ENCODE measurements at regions of chr2 and their contacts with region 1.

Region 1: GRCh38 chr2:63424329-63425078 is 163.8 kb downstream of the WDPCP start:
- DNase-seq: peak; percentile 72
- H3K4me3 ChIP-seq: no peak overlapping the region
- H3K27ac ChIP-seq: no peak overlapping the region
- H3K4me1 ChIP-seq: no peaks in the 10 kb centered on the region
- CTCF ChIP-seq: peak; percentile 91

Region 2: GRCh38 chr2:62456721-62457539 is 967.6 kb before region 1 on chr2:
- CTCF ChIA-PET with region 1: no interaction called
- POLR2A ChIA-PET with region 1: no interaction called
- intact Hi-C with region 1: no loop called
- DNase-seq: peak; percentile 41
- H3K4me3 ChIP-seq: no peak overlapping the region
- H3K27ac ChIP-seq: no peak overlapping the region
- H3K4me1 ChIP-seq: no peaks in the 10 kb centered on the region
- CTCF ChIP-seq: peak; percentile 84

Region 3: DNA sequence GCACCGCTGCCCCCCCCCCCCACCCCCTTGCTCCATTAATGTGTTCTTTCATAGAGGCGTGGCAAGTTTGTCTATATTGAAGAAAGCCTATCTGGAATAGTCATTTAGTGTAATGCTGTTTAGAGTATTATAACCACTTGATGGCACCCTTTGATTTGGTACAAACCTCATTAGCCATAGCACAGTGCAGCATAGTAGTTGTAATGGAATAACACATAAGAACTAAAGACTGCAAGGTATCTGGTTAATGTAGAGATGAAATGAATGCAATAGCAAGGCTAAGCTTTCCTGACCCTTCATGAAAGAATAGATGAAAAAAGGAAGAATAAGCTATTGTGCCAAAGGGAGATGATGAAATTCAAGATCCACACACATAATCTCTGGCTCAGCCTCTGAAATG is 637.1 kb before region 1 on chr2:
- CTCF ChIA-PET with region 1: no interaction called
- POLR2A ChIA-PET with region 1: no interaction called
- intact Hi-C with region 1: loop called (anchors 10 kb)
- DNase-seq: peak; percentile 35
- H3K4me3 ChIP-seq: no peak overlapping the region
- H3K27ac ChIP-seq: no peak overlapping the region
- H3K4me1 ChIP-seq: no peaks in the 10 kb centered on the region
- CTCF ChIP-seq: peak; percentile 60

Region 4: GRCh38 chr2:63078852-63079606 is 345.5 kb before region 1 on chr2:
- CTCF ChIA-PET with region 1: no interaction called
- POLR2A ChIA-PET with region 1: no interaction called
- intact Hi-C with region 1: loop called (anchors 10 kb)
- DNase-seq: peak; percentile 16
- H3K4me3 ChIP-seq: no peak overlapping the region
- H3K27ac ChIP-seq: no peak overlapping the region
- H3K4me1 ChIP-seq: no peaks in the 10 kb centered on the region
- CTCF ChIP-seq: peak; percentile 74

Region 5: DNA sequence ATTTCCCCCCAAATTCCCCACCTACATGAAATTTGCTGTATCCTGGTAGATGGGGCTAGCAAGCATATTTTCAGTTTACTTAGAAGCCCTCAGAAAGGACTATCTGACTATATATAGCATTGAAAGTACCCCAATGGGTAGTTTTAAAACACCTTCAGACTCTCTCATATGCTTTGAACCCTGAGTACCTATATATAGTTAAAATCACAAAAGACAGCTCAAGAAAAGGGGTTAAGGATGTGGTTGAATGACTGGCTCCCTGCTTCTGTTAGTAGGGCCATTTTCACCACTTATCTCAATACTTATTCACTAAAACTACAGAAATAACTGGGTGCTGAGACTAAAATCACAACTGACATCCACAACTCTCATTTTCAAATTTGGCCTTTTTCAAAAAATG is 145.2 kb after region 1 on chr2:
- CTCF ChIA-PET with region 1: no interaction called
- POLR2A ChIA-PET with region 1: no interaction called
- intact Hi-C with region 1: no loop called
- DNase-seq: no peak
- H3K4me3 ChIP-seq: no peak overlapping the region
- H3K27ac ChIP-seq: no peak overlapping the region
- H3K4me1 ChIP-seq: no peaks in the 10 kb centered on the region
- CTCF ChIP-seq: no peak

Measured in OCI-LY7 (cell line).